ENCODE measurements at regions of chr17 and their contacts with region 1.

Region 1: DNA sequence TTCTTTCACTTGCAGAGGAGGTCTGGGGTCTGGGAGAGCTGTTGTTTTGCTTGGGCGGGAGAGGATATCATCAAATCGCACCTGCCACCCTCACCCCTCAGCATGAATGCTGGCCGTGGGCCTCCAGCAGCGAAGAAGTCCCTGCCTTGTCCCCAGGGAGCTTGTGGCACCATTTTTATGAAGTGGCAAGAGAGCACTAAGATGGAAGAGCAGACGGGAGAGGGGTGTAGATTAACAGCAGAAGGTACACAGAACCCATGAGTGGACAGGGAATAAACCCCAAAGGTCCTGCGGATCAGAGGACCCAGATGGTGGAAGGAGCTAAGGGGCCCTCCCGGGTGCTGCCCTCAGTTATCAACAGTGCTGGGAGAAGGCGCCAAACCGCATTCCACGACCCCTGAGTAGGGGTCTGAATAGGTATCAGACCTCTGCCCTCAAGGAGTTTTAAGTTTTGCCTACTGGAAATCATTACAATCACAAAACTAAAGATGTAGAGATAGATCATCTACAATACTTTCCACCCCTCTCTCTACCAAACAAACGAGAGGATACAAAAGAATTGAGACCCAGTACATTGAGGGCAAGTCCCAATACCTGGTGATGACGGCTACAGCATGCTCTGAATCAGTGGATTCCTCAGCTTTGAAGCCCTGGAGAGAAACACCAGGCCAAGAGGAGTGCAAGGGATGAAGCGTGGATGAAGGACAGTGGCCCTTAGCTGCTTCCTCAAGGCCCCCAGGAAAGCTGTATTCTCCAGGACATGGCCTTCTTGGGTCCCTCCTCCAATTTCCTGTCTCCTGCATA is 60.2 kb downstream of the CCDC182 start:
- DNase-seq: no peak
- ATAC-seq: no peak
- H3K4me3 ChIP-seq: no peak overlapping the region
- H3K27ac ChIP-seq: no peak overlapping the region
- H3K4me1 ChIP-seq: peaks cover 8% of the 10 kb centered on the region
- H3K27me3 ChIP-seq: no peaks in the 10 kb centered on the region
- CTCF ChIP-seq: no peak

Region 2: DNA sequence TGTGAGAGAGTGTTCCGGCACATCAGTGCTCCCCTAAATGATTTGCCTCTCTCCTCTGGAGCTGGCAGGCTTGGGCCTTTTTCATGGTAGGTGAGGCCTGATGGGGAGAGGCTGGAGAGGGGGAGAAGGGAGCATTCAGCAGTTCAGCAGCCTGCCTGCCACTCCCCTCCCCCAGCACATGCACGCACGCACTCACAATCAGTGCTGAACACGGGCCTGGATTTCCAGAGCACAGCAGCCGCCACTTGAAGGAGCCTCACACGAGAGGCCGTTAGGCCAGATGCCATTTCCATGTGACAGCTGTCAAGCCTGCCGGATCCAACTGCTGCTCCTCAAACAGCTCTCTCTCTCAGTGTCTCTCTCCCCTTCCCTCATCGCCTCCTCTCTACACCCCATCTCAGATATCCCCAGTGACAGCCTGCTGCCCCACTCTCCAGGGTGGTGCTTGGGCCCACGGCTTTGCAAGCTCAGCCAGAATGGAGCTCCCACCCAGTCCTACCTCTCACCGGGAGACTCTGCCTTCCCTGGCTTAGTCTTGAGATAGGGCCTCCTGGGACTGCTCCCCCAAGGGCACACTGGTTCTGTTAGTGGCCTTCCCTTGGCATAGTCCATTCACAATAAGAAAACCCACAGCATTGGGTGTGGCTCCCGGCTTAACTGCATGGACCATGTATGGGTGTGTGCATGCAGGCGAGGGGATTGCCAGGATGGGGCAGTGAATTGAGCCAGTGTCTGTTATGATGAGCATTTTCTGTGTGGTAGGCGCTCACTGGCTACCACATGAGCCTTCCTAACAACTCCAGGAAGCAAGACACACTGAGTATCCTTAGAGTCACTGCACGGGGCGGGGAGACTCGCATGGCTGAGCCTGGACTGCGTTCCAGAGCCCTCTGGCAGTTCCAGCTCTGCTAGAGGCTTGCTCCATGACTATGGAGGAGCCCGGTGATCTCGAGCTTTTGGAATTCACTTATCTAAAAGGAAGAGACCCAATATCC is 166.0 kb before region 1 on chr17:
- CTCF ChIA-PET with region 1: no interaction called
- POLR2A ChIA-PET with region 1: no interaction called
- intact Hi-C with region 1: no loop called
- DNase-seq: peak; percentile 74
- ATAC-seq: peak; percentile 45
- H3K4me3 ChIP-seq: no peak overlapping the region
- H3K27ac ChIP-seq: peak overlapping the region; percentile 31
- H3K4me1 ChIP-seq: peaks cover 32% of the 10 kb centered on the region
- H3K27me3 ChIP-seq: no peaks in the 10 kb centered on the region
- CTCF ChIP-seq: no peak

Region 3: GRCh38 chr17:57612202-57613071 is 72.5 kb before region 1 on chr17:
- CTCF ChIA-PET with region 1: no interaction called
- POLR2A ChIA-PET with region 1: no interaction called
- intact Hi-C with region 1: no loop called
- DNase-seq: no peak
- ATAC-seq: no peak; the same call in 1 of the 2 replicates
- H3K4me3 ChIP-seq: no peak overlapping the region
- H3K27ac ChIP-seq: no peak overlapping the region
- H3K4me1 ChIP-seq: peaks cover 8% of the 10 kb centered on the region
- H3K27me3 ChIP-seq: no peaks in the 10 kb centered on the region
- CTCF ChIP-seq: no peak

Region 4: DNA sequence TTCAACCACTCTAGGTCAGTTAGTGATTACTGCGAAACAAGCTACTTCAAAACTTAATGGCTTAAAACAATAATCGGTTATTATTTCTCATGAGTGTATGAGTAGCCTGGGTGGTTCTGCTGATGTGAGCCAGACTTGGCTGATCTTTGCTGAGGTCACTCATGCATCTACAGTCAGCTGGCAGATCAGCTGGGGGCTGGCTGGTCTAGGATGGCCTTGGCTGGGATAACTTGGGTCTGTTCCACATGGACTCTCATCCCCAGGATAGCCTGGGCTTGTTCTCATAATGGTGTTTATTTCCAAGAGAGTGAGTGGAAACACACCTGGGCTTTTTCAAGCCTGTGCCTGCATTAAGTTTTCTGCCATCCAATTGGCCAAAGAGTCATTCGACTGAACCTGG is 47.2 kb after region 1 on chr17:
- CTCF ChIA-PET with region 1: interaction called, 15 read pairs
- POLR2A ChIA-PET with region 1: no interaction called
- intact Hi-C with region 1: no loop called
- DNase-seq: no peak
- ATAC-seq: no peak
- H3K4me3 ChIP-seq: no peak overlapping the region
- H3K27ac ChIP-seq: no peak overlapping the region
- H3K4me1 ChIP-seq: no peaks in the 10 kb centered on the region
- H3K27me3 ChIP-seq: peaks cover 34% of the 10 kb centered on the region; the same call in 1 of the 2 replicates
- CTCF ChIP-seq: no peak

Region 5: GRCh38 chr17:57902800-57903759 is 218.2 kb after region 1 on chr17:
- CTCF ChIA-PET with region 1: no interaction called
- POLR2A ChIA-PET with region 1: no interaction called
- intact Hi-C with region 1: no loop called
- DNase-seq: peak; percentile 98
- ATAC-seq: peak; percentile 82
- H3K4me3 ChIP-seq: no peak overlapping the region
- H3K27ac ChIP-seq: peak overlapping the region; percentile 96
- H3K4me1 ChIP-seq: peaks cover 64% of the 10 kb centered on the region
- H3K27me3 ChIP-seq: no peaks in the 10 kb centered on the region
- CTCF ChIP-seq: no peak

Measured in PC-3 (cell line).